ENCODE measurements at regions of chr7 and their contacts with region 1.

Region 1: GRCh38 chr7:73851410-73852234 is 9.3 kb upstream of the METTL27 start:
- DNase-seq: no peak
- H3K4me3 ChIP-seq: no peak overlapping the region
- H3K27ac ChIP-seq: peak overlapping the region in 2 of 3 donors; percentile 60 to 83
- H3K4me1 ChIP-seq: peaks cover 3 to 26% of the 10 kb centered on the region in 2 donors
- H3K27me3 ChIP-seq: no peaks in the 10 kb centered on the region
- CTCF ChIP-seq: no peak
- POLR2A ChIP-seq: no peak

Region 2: DNA sequence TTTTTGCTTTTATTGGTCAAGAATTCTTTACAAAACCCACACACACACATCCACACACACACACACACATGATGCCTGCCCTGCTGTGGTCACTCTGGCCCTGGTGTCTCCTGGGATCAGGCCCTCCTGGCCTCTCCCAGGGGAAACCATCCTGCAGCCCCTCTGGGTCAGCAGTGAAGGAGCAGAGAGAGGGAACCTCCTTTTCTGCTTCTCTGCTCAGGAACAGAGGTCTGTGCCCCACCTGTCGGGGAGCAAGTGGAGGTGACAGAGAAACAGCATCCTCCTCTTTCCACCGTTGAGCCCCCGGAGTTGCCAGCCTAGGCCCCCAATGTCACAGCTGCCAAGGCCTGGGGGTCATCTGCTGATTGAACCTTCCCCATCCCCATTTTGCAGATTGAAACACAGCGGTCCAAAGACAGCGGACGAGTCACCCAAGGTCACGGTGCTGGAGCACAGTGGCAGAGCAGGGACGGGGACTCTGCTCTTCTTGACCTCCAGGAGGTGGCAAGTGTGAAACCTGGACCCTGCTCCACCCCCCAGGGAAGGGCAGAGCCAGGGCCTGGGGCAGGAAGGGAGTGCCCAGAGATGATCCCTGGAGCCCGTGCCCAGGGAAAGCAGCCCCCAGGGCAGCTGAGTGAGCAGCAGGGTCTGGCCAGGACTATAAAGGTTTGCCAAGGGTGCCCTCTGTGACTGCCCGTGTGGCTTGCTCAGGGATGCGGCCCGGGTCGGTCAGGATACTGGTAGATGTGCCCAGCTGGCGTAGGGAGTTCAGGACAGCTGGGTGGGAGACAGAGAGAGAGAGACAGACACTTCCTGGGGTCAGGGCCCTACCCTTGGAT is 258.2 kb before region 1 on chr7:
- intact Hi-C with region 1: no loop called
- DNase-seq: no peak
- H3K4me3 ChIP-seq: no peak overlapping the region
- H3K27ac ChIP-seq: no peak overlapping the region
- H3K4me1 ChIP-seq: no peaks in the 10 kb centered on the region
- H3K27me3 ChIP-seq: no peaks in the 10 kb centered on the region
- CTCF ChIP-seq: no peak
- POLR2A ChIP-seq: no peak

Region 3: DNA sequence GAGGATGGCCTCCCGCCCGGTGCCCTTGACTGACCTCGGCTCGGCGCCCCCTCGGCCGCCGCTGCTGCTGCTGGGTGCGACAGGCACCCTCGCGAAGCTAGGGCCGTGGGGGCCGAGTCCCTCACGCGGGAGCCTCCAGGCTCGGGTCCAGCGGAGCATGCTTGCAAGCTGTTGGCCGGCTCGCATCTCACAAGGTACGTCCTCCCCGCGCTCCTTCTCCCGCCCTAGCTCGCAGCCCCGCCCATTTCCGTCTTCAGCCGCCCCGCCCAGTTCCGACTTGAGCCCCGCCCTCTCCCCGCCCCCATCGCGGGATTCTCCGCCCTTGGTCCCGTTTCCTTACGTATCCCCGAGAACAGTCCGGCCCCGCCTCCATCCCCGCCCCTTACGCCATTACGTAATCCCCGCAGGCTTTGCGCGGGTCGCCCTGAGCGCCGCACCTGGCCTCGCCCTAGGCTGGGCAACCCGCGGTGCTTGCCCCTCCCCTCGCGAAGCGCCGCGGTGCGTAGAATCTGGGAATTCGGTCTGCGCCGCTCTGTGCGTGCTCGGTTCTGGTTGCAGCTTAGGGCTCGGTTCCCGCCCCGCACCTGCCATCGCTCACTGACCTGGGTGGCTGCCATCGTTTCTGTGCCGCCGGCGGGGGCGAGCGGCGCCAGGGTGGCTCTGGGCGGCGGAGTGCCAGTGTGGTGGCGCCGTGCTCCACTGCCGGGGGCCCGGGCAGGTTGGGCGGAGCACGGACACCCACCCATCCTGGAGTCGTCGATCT is 112.8 kb before region 1 on chr7 and contains the start of gene ABHD11:
- intact Hi-C with region 1: loop called (anchors 5 kb)
- DNase-seq: peak; percentile 97 to 98
- H3K4me3 ChIP-seq: peak within 1 kb of the TSS; percentile 61 to 87 (median 79)
- H3K27ac ChIP-seq: peak within 1 kb of the TSS; percentile 98 to 100 (median 99)
- H3K4me1 ChIP-seq: peaks cover 47 to 71% of the 10 kb centered on the region in 2 donors
- H3K27me3 ChIP-seq: no peaks in the 10 kb centered on the region
- CTCF ChIP-seq: no peak
- POLR2A ChIP-seq: peak; percentile 91 to 98
- total RNA-seq, gene ABHD11: 39.5 to 75.8 (median 67.1) TPM

Region 4: DNA sequence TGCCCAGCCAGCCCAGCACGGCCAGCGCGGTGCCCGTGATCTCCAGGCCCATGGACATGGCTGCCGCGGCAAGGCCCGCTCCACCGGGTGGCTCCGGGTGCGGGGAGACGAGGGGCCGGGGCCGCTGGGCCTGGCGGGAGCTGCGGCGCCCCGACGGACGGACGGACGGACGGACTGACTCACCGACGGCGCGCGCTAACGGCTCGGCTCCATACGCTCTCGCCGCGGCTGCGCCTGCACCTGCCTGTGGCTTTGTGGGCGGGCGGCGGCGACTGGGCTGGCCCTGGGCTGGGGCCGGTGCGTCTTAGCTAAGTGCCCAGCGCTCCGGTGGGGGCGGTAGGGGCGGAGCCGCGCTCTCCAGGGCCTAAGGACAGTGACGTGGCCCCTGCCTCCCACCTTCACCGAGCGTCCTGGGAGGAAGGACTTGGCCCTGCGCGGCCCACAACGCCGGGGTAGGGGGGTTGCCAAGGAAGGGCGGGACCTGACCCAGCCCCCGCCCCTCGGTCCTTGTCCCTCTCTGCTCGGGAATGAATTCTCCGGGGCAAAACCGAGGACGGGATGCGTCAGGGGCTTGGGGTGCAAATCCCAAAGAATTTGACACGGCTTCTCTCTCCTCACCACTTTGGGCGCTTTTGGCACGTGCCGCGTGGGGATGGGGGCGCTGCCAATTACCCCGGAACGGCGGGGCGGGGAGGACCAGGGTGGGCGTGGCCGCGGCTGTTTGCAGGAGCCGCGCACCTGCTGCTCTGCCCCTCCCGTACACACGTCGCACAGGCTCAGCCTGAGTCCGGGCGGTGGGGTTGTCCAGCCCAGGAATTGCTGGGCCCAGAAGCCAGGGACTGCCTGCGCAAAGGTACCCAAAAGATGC is 81.4 kb before region 1 on chr7 and contains the start of gene CLDN3:
- intact Hi-C with region 1: loop called (anchors 10 kb)
- DNase-seq: peak; percentile 98 to 99
- H3K4me3 ChIP-seq: peak within 1 kb of the TSS; percentile 58 to 84 (median 70)
- H3K27ac ChIP-seq: peak within 1 kb of the TSS; percentile 92 to 96 (median 95)
- H3K4me1 ChIP-seq: peaks cover 15 to 24% of the 10 kb centered on the region in 2 donors
- H3K27me3 ChIP-seq: no peaks in the 10 kb centered on the region
- CTCF ChIP-seq: peak in 1 of 6 experiments; percentile 12
- POLR2A ChIP-seq: peak; percentile 97 to 99
- total RNA-seq, gene CLDN3: 249 to 330 (median 288) TPM

Region 5: GRCh38 chr7:73811760-73812168 is 39.9 kb before region 1 on chr7:
- intact Hi-C with region 1: loop called (anchors 2 kb)
- DNase-seq: peak; percentile 72 to 82
- H3K4me3 ChIP-seq: no peak overlapping the region
- H3K27ac ChIP-seq: no peak overlapping the region
- H3K4me1 ChIP-seq: peaks cover 0 to 23% of the 10 kb centered on the region in 2 donors
- H3K27me3 ChIP-seq: no peaks in the 10 kb centered on the region
- CTCF ChIP-seq: peak; percentile 56 to 87 (median 79)
- POLR2A ChIP-seq: no peak